WTC11 (cell line): ENCODE measurements at regions of chr20 and their contacts with region 1.

Region 1: GRCh38 chr20:36439040-36439730 is 102.1 kb upstream of the MYL9 start:
- DNase-seq: peak; percentile 93
- ATAC-seq: peak; percentile 66
- H3K4me3 Mint-ChIP-seq: no peak overlapping the region
- H3K27ac Mint-ChIP-seq: no peak overlapping the region
- H3K4me1 Mint-ChIP-seq: peaks cover 4% of the 10 kb centered on the region
- H3K27me3 Mint-ChIP-seq: peaks cover 19% of the 10 kb centered on the region
- CTCF ChIP-seq: peak; percentile 91

Region 2: DNA sequence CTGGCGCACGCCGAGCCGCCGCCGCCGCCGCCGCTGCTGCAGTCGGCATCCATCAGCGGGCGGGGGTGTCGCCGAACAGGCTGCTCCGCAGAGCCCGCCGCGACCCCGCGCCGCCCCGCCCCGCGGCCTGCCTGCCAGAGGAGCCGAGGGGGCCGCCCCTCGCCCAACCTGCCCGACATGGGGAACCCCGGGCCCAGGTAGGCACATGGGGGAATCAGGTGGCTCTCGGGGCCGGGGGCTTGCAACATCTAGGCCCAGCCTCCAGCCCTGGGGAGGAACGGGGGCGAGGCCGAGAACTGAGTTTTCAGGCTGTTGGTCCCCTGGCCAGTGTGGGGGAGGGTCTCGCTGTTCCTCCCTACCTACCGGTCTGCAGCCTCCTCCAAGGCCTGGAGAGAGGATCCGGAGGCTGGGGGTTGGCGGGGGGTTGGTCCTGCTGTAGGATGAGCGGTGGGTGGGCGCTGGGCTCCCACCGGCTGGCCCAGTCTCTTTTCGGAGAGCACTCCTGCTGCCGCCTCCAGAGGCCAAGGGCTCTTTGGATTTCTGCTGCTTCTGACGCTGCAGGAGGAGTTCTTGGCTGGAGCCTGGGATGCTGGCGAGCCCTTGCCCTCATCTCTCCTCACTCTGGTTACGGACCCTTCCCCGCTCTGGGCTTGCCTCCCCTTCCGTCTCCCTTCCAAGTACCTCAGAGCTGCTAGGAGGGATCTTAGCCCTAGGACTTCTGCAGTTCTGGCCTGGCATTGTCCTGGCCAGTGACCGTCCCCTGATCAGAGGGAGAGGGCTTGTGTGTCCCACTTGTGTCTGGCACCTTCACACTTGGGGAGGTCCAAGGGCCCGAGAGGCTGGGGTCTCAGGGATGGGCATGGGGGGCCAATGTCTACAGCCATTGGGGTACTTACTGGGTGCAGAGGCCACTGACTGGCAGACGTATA is 284.2 kb before region 1 on chr20 and contains the start of gene EPB41L1:
- CTCF ChIA-PET with region 1: interaction called, 11 read pairs
- POLR2A ChIA-PET with region 1: no interaction called
- DNase-seq: peak; percentile 57
- ATAC-seq: peak; percentile 49
- H3K4me3 Mint-ChIP-seq: peak within 1 kb of the TSS; percentile 78
- H3K27ac Mint-ChIP-seq: no peak within 1 kb of the TSS
- H3K4me1 Mint-ChIP-seq: peaks cover 23% of the 10 kb centered on the region
- H3K27me3 Mint-ChIP-seq: peaks cover 21% of the 10 kb centered on the region
- CTCF ChIP-seq: no peak
- total RNA-seq, gene EPB41L1: 37.7 to 38.7 TPM (median 38.1 TPM) in 3 replicates

Region 3: DNA sequence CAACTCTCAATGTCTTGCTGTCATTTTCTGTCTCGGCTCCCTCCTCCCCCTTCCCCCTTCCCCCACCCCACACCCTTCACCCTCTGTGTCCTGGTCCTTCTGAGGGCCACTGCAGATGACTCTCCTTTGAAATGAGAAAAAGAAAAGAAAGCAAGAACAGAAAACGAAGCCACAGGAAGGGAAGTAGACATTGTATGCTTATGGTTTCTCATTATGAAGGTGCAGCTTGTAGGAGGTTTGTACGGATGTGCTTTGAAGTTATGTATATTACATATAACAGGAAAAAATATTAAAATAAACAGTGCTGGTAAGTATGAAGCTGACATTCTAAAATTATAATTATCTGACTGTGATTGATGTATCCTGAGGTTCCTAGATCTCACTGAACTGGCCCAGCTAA is 209.2 kb before region 1 on chr20:
- CTCF ChIA-PET with region 1: interaction called, 10 read pairs
- POLR2A ChIA-PET with region 1: no interaction called
- DNase-seq: no peak
- ATAC-seq: no peak
- H3K4me3 Mint-ChIP-seq: no peak overlapping the region
- H3K27ac Mint-ChIP-seq: no peak overlapping the region
- H3K4me1 Mint-ChIP-seq: no peaks in the 10 kb centered on the region
- H3K27me3 Mint-ChIP-seq: no peaks in the 10 kb centered on the region
- CTCF ChIP-seq: no peak

Region 4: GRCh38 chr20:36273414-36274180 is 165.6 kb before region 1 on chr20:
- CTCF ChIA-PET with region 1: interaction called, 54 read pairs
- POLR2A ChIA-PET with region 1: no interaction called
- DNase-seq: no peak
- ATAC-seq: no peak; the same call in 1 of the 2 replicates
- H3K4me3 Mint-ChIP-seq: no peak overlapping the region
- H3K27ac Mint-ChIP-seq: no peak overlapping the region
- H3K4me1 Mint-ChIP-seq: peaks cover 25% of the 10 kb centered on the region
- H3K27me3 Mint-ChIP-seq: no peaks in the 10 kb centered on the region; the same call in 1 of the 2 replicates
- CTCF ChIP-seq: no peak

Region 5: GRCh38 chr20:36331006-36331608 is 108.1 kb before region 1 on chr20:
- CTCF ChIA-PET with region 1: interaction called, 11 read pairs
- POLR2A ChIA-PET with region 1: no interaction called
- DNase-seq: no peak
- ATAC-seq: no peak
- H3K4me3 Mint-ChIP-seq: no peak overlapping the region
- H3K27ac Mint-ChIP-seq: no peak overlapping the region
- H3K4me1 Mint-ChIP-seq: peaks cover 42% of the 10 kb centered on the region
- H3K27me3 Mint-ChIP-seq: peaks cover 66% of the 10 kb centered on the region
- CTCF ChIP-seq: no peak

Region 6: GRCh38 chr20:36384022-36384619 is 55.1 kb before region 1 on chr20:
- CTCF ChIA-PET with region 1: interaction called, 10 read pairs
- POLR2A ChIA-PET with region 1: no interaction called
- DNase-seq: peak; percentile 88
- ATAC-seq: peak; percentile 100
- H3K4me3 Mint-ChIP-seq: no peak overlapping the region
- H3K27ac Mint-ChIP-seq: no peak overlapping the region
- H3K4me1 Mint-ChIP-seq: no peaks in the 10 kb centered on the region
- H3K27me3 Mint-ChIP-seq: no peaks in the 10 kb centered on the region; the same call in 1 of the 2 replicates
- CTCF ChIP-seq: no peak

Region 7: DNA sequence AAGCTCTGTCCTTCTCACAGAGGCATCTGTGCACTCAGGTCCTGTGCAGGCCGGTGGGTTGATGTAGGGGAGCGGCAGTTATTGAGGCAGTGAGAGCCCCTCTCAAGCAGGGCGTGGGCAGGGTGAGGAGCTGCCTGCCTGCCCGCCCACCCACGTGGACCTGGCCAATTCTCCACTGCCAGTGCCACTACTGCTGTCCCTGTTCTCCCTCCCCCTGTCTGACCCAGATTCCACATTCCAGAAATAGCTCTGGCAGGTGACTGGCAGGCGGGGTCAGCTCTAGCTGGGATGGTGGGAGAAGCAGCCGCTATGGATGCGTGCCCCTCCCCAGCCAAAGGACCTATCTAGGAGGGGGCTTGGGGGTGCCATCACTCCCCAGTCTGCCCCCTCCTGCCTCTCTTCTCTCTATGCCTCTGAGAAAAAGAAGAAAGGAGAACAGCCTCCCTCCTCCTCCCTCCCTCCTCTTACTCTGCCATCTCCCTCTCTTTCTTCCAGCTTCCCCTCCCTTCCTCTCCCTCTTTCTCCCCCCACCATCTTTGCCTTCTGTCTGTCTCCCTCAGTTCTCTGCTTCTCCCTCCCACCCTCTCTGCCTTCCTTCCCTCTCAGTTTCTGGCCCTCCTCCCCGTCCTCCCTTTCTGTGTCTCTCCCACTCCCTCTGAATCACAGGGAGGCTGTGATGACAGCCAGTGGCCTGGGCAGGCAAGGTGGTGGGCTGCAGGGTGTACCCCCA is 15.7 kb after region 1 on chr20:
- CTCF ChIA-PET with region 1: interaction called, 25 read pairs
- POLR2A ChIA-PET with region 1: interaction called, 3 read pairs
- DNase-seq: peak; percentile 50
- ATAC-seq: peak; percentile 82
- H3K4me3 Mint-ChIP-seq: no peak overlapping the region
- H3K27ac Mint-ChIP-seq: no peak overlapping the region
- H3K4me1 Mint-ChIP-seq: peaks cover 20% of the 10 kb centered on the region
- H3K27me3 Mint-ChIP-seq: no peaks in the 10 kb centered on the region
- CTCF ChIP-seq: no peak